H1 (cell line): ENCODE measurements at regions of chr13 and their contacts with region 1.

Region 1: GRCh38 chr13:44104197-44104490 is 224.4 kb downstream of the LACC1 start:
- DNase-seq: no peak
- H3K4me3 ChIP-seq: no peak overlapping the region
- H3K27ac ChIP-seq: no peak overlapping the region
- H3K4me1 ChIP-seq: peaks cover 0 to 6% (median 0%) of the 10 kb centered on the region in 4 experiments; a peak in 2 of 7 replicates
- H3K27me3 ChIP-seq: no peaks in the 10 kb centered on the region
- CTCF ChIP-seq: no peak
- EP300 ChIP-seq: no peak
- POLR2A ChIP-seq: no peak
- RAD21 ChIP-seq: no peak

Region 2: DNA sequence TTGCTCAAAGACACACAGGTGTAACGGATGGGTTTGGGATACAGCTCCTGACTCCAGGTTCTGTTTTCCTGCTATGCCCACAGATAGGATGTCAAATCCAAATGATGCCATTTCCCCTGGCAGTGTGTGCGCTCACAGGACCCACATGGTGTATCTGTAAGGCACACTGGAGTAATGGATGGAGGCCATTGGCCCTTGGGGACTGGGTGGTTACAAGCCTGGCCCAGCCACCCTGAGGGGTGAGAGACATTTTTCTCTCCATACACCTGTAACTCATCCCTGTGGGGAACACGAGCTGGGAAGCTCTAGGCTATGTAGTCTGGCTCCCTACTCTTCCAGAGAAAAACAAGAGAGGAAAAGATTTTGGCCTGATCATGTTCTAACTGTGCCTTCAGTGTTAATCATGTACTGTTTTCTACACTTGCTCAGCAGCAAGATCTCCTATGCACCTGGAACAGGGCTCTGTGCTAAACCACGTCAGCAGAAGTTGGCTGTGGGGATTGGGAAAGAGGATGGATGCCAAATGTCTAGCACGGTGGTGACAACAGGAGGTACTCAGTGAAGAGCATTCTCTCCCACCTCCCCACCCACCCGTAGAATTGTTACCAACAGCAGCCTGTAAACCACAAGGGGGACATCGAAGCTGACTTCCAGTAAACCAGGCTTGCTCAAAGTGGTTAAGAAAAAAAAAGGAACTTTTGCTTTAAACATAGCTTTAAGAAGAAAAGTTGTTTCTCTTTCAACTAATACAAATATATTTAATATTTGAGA is 12.6 kb after region 1 on chr13:
- CTCF ChIA-PET with region 1: interaction called, 17 read pairs
- POLR2A ChIA-PET with region 1: interaction called, 4 read pairs
- DNase-seq: peak in 1 of 2 experiments; percentile 47
- H3K4me3 ChIP-seq: no peak overlapping the region
- H3K27ac ChIP-seq: no peak overlapping the region
- H3K4me1 ChIP-seq: peaks cover 2 to 7% (median 3%) of the 10 kb centered on the region in 4 experiments; a peak in 5 of 7 replicates
- H3K27me3 ChIP-seq: no peaks in the 10 kb centered on the region
- CTCF ChIP-seq: peak in 2 of 3 experiments; percentile 11 to 23; a peak in 1 of 4 replicates
- EP300 ChIP-seq: no peak
- POLR2A ChIP-seq: no peak
- RAD21 ChIP-seq: no peak; a peak in 1 of 4 replicates